Activated naive CD4-positive, alpha-beta T cell treated with anti-CD3 and anti-CD28 coated beads for 36 hours (primary cell): ENCODE measurements at regions of chrX and their contacts with region 1.

Region 1: DNA sequence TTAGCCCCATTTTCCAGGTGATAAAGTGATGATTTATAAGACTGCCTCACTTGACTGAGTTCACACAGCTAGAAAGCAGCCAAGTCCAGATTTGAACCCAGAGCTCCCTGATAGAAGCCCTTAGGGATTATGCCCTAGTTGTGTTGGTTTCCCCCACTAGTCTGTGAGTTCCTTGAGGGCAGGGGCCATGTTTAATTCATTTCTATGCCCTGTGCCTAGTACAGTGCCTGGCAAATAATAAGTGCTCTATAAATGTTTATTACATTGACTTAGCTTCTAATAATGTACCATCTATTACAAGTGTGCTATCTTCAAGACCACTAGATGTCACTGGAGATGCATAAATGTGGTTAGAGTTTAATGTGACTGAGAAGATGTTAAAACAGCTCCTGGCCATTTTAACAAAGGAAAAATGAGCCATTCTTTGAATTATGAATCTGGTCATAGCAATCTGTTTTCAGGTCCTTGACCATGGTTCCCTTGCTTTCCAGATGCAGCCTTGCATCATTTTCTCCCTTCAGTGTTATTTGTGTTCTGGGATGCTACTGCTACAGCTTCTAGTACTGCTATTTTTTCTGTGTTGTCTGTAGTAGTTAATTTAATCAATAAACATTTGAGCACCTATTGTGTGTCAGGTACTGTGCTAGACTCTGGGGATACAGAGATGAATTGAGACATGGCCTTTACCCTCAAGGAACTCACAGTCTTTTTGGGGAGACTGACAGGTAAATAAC is 43.2 kb downstream of the SLC9A6 start:
- DNase-seq: no peak
- H3K4me3 Mint-ChIP-seq: no peak overlapping the region
- H3K27ac Mint-ChIP-seq: no peak overlapping the region
- H3K4me1 Mint-ChIP-seq: no peaks in the 10 kb centered on the region
- H3K27me3 Mint-ChIP-seq: no peaks in the 10 kb centered on the region

Region 2: DNA sequence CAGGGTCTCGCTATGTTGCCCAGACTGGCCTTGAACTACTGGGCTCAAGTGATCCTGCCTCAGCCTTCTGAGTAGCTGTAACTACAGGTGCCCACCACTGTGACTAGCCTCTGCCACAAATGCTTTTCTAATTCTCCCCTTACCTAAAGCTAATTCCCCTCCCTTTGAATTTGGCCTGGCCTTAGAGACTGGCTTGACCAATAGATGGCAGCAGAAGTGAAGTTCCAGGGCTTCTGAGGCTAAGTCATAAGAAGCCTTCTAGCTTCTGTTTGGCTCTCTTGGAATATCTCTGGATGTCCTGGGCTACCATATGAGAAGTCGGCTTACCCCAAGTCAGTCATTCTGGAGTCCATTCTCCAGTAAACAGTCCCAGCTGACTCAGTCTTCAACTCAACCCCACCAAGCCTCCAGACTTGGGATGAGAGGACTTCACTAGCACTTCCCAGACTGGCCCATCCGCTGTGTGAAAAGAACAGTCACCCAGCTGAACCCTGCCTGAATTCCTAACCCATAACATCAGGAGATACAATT is 1507.5 kb before region 1 on chrX:
- CTCF ChIA-PET with region 1: no interaction called
- intact Hi-C with region 1: no loop called
- DNase-seq: peak; percentile 8
- H3K4me3 Mint-ChIP-seq: no peak overlapping the region
- H3K27ac Mint-ChIP-seq: no peak overlapping the region
- H3K4me1 Mint-ChIP-seq: peaks cover 3% of the 10 kb centered on the region
- H3K27me3 Mint-ChIP-seq: no peaks in the 10 kb centered on the region

Region 3: GRCh38 chrX:136083385-136083937 is 55.0 kb after region 1 on chrX:
- CTCF ChIA-PET with region 1: no interaction called
- intact Hi-C with region 1: no loop called
- DNase-seq: no peak
- H3K4me3 Mint-ChIP-seq: no peak overlapping the region
- H3K27ac Mint-ChIP-seq: no peak overlapping the region
- H3K4me1 Mint-ChIP-seq: no peaks in the 10 kb centered on the region
- H3K27me3 Mint-ChIP-seq: no peaks in the 10 kb centered on the region

Region 4: GRCh38 chrX:136162831-136163570 is 134.6 kb after region 1 on chrX:
- CTCF ChIA-PET with region 1: interaction called, 58 read pairs
- intact Hi-C with region 1: loop called (anchors 1 kb)
- DNase-seq: peak; percentile 72
- H3K4me3 Mint-ChIP-seq: no peak overlapping the region
- H3K27ac Mint-ChIP-seq: no peak overlapping the region
- H3K4me1 Mint-ChIP-seq: peaks cover 3% of the 10 kb centered on the region
- H3K27me3 Mint-ChIP-seq: no peaks in the 10 kb centered on the region

Region 5: DNA sequence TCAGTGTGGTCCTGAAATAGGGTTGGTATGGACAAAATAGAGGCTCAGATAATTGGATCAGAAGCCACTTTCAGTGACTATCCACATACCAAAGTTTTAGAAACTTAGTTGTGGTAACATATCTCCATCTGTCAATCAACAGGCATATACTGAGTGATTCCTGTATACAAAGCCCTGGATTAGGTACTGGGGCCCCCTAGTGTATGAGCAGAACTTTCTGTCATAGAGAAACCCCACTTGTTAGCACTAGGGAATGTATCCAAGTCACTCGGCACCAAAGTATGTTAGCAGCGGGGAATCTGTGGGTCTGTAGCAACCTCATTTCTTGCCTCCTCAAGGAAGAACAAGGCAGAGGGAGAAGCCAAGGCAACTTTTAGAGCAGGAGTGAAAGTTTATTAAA is 172.0 kb after region 1 on chrX:
- CTCF ChIA-PET with region 1: interaction called, 7 read pairs
- intact Hi-C with region 1: loop called (anchors 2 kb)
- DNase-seq: peak; percentile 18
- H3K4me3 Mint-ChIP-seq: no peak overlapping the region
- H3K27ac Mint-ChIP-seq: no peak overlapping the region
- H3K4me1 Mint-ChIP-seq: peaks cover 27% of the 10 kb centered on the region
- H3K27me3 Mint-ChIP-seq: no peaks in the 10 kb centered on the region

Region 6: DNA sequence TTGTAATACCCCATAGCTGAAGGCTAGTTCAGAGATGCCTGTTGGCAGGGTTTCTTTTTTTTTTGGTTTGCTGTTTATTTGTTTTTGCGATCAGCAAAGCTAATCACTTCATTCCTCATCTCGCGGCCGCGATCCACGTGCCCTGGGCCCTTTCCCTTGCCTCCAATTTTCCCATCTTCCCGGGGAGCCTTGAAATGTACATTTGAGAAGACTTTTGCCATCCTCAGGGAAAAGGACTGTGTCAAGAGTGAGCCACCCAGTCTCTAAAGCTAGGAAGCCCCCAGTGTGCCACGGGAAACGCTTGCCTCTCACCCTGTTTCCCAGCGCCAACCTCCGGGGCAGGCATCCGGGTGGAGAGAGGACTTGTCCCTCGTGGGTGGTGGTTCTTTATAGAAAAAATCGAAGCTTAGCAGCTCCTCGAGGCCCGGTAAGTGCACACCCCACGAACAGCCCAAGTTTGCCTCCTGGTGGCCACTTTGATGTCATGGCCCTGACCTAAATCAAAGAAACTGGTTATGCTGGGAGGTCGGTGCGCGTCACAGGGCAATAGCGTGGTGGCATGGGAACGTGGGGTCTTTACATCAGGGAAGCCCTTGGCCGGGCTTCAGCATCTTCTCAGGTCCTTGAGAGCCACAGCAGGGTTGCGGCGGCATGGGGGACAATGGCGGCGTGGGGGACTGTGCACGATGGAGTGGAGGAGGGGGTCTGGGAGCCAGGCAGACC is 180.8 kb after region 1 on chrX:
- CTCF ChIA-PET with region 1: interaction called, 13 read pairs
- intact Hi-C with region 1: no loop called
- DNase-seq: peak; percentile 39
- H3K4me3 Mint-ChIP-seq: no peak overlapping the region
- H3K27ac Mint-ChIP-seq: no peak overlapping the region
- H3K4me1 Mint-ChIP-seq: peaks cover 13% of the 10 kb centered on the region
- H3K27me3 Mint-ChIP-seq: no peaks in the 10 kb centered on the region